ENCODE measurements at regions of chr2 and their contacts with region 1.

Region 1: GRCh38 chr2:134927195-134927594 is 8.6 kb downstream of the CCNT2 start:
- DNase-seq: no peak
- ATAC-seq: no peak
- H3K4me3 ChIP-seq: no peak overlapping the region
- H3K4me3 Mint-ChIP-seq: peak overlapping the region in 1 of 3 donors; percentile 60
- H3K27ac ChIP-seq: no peak overlapping the region
- H3K27ac Mint-ChIP-seq: no peak overlapping the region
- H3K4me1 ChIP-seq: peaks cover 20 to 27% of the 10 kb centered on the region in 2 experiments
- H3K4me1 Mint-ChIP-seq: peaks cover 73 to 87% (median 85%) of the 10 kb centered on the region in 3 donors
- H3K27me3 ChIP-seq: no peaks in the 10 kb centered on the region
- H3K27me3 Mint-ChIP-seq: no peaks in the 10 kb centered on the region

Region 2: GRCh38 chr2:135130751-135131150 is 203.6 kb after region 1 on chr2:
- CTCF ChIA-PET with region 1: no interaction called
- POLR2A ChIA-PET with region 1: no interaction called
- DNase-seq: no peak
- ATAC-seq: no peak
- H3K4me3 ChIP-seq: no peak overlapping the region
- H3K4me3 Mint-ChIP-seq: no peak overlapping the region
- H3K27ac ChIP-seq: no peak overlapping the region
- H3K27ac Mint-ChIP-seq: no peak overlapping the region
- H3K4me1 ChIP-seq: no peaks in the 10 kb centered on the region
- H3K4me1 Mint-ChIP-seq: peaks cover 0 to 2% (median 2%) of the 10 kb centered on the region in 3 donors
- H3K27me3 ChIP-seq: no peaks in the 10 kb centered on the region
- H3K27me3 Mint-ChIP-seq: no peaks in the 10 kb centered on the region

Region 3: DNA sequence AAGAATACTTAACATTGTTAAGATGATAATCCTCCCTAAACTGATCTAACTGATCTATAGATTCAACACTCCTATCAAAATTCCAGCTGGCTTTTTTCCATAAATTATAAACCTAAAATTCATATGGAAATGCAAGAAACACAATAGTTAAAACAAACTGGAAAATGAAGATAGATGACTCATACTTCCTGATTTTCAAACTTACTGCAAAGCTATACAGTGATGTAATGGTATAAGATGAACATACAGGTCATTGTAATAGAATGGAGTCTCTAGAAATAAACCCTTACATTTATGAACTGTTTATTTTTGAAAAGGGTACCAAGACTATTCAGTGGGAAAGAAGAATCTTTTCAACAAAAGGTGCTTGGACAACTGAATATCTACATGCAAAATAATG is 846.7 kb after region 1 on chr2:
- CTCF ChIA-PET with region 1: no interaction called
- POLR2A ChIA-PET with region 1: interaction called in 1 of 2 experiments, 10 read pairs
- DNase-seq: no peak
- ATAC-seq: no peak
- H3K4me3 ChIP-seq: no peak overlapping the region
- H3K4me3 Mint-ChIP-seq: no peak overlapping the region
- H3K27ac ChIP-seq: no peak overlapping the region
- H3K27ac Mint-ChIP-seq: no peak overlapping the region
- H3K4me1 ChIP-seq: no peaks in the 10 kb centered on the region
- H3K4me1 Mint-ChIP-seq: no peaks in the 10 kb centered on the region
- H3K27me3 ChIP-seq: no peaks in the 10 kb centered on the region
- H3K27me3 Mint-ChIP-seq: no peaks in the 10 kb centered on the region